AG04450 (cell line): ENCODE measurements at regions of chr6 and their contacts with region 1.

Region 1: GRCh38 chr6:36885461-36886401 is at the start of gene C6orf89:
- DNase-seq: peak; percentile 95
- H3K4me3 ChIP-seq: peak within 1 kb of the TSS; percentile 85
- H3K27ac ChIP-seq: peak within 1 kb of the TSS; percentile 22
- H3K27me3 ChIP-seq: no peaks in the 10 kb centered on the region
- CTCF ChIP-seq: peak; percentile 85
- polyA plus RNA-seq, gene C6orf89: 59.7 and 60.4 TPM in 2 replicates

Region 2: DNA sequence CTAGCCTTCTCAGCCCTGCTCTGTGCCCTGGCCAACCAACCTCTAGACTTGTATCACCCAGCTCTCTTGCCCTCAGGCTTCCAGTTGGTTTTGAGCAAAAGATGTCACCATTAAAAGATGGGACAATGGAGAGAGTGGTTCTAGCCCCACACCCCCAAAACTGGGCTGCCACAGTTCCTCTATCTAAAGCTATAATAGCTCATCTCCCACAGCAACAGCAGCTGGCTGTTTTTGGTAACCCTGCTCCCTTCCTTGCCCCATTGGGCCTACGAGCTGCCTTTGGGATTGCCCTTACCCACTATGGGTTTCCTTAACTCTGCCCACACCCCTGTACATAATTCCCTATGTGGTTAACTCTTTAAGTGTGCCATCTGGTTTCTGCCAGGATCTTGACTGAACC is 299.1 kb before region 1 on chr6:
- CTCF ChIA-PET with region 1: no interaction called
- POLR2A ChIA-PET with region 1: no interaction called
- DNase-seq: no peak
- H3K4me3 ChIP-seq: no peak overlapping the region
- H3K27ac ChIP-seq: no peak overlapping the region
- H3K27me3 ChIP-seq: no peaks in the 10 kb centered on the region
- CTCF ChIP-seq: no peak

Region 3: DNA sequence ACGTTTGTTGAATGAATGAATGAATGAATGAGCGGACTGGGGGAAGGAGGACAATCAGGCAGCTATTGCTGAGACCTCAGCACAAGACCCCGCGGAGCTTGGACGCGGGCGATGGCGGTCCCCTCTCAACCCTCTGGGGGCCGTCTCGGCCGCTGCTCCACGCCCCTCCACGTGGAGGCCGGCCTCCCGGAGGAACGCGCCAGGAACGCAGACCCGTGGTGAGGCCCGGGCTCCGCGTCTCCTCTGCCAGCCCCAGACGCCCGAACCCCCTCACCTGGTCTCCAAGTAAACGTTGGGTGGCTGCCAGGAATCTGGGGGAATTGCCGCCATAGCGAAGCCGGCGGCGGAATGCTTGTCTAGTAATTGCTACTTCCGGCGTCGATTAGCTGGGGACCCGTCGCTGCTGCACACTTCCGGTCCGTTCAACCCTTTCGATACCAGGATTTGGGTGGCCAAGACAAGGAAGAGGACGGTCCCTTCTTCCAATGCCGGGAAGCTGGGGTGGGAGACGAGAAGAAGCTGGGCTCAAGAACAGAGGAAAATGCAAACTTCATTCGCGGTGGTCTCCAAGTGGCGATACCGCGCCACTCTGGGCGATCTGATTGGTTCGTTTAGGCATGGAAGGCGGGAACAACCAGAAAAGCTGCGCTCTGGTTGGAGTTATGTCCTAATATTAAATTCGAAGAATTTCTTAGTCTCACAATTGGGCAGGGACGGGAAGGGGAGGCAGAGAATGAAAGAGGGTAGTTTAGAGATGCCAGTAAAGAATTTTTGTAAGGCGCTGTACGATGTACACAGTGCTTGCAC is 11.1 kb before region 1 on chr6 and contains the start of gene PPIL1:
- CTCF ChIA-PET with region 1: interaction called, 74 read pairs
- POLR2A ChIA-PET with region 1: interaction called, 7 read pairs
- DNase-seq: peak; percentile 76
- H3K4me3 ChIP-seq: peak within 1 kb of the TSS; percentile 98
- H3K27ac ChIP-seq: peak within 1 kb of the TSS; percentile 98
- H3K27me3 ChIP-seq: no peaks in the 10 kb centered on the region
- CTCF ChIP-seq: 0 out of 2 replicates have a peak, but pooled peaks have one; percentile 11
- polyA plus RNA-seq, gene PPIL1: 34.4 and 40.7 TPM in 2 replicates

Region 4: GRCh38 chr6:36904114-36904513 is 18.4 kb after region 1 on chr6:
- CTCF ChIA-PET with region 1: interaction called, 10 read pairs
- POLR2A ChIA-PET with region 1: interaction called, 6 read pairs
- DNase-seq: no peak
- H3K4me3 ChIP-seq: no peak overlapping the region
- H3K27ac ChIP-seq: peak overlapping the region; percentile 12
- H3K27me3 ChIP-seq: no peaks in the 10 kb centered on the region
- CTCF ChIP-seq: no peak

Region 5: GRCh38 chr6:36979347-36979742 is 93.6 kb after region 1 on chr6:
- CTCF ChIA-PET with region 1: interaction called, 15 read pairs
- POLR2A ChIA-PET with region 1: no interaction called
- DNase-seq: no peak
- H3K4me3 ChIP-seq: no peak overlapping the region
- H3K27ac ChIP-seq: no peak overlapping the region
- H3K27me3 ChIP-seq: no peaks in the 10 kb centered on the region
- CTCF ChIP-seq: peak; percentile 75

Region 6: GRCh38 chr6:37207903-37208456 is 322.2 kb after region 1 on chr6:
- CTCF ChIA-PET with region 1: interaction called, 11 read pairs
- POLR2A ChIA-PET with region 1: interaction called, 3 read pairs
- DNase-seq: peak; percentile 47
- H3K4me3 ChIP-seq: no peak overlapping the region
- H3K27ac ChIP-seq: no peak overlapping the region
- H3K27me3 ChIP-seq: no peaks in the 10 kb centered on the region
- CTCF ChIP-seq: peak; percentile 87